Activated CD4-positive, alpha-beta memory T cell treated with anti-CD3 and anti-CD28 coated beads, Interleukin-2, amount 10 ng/mL, durations not matched to agents 7 days and 5 days (primary cell): ENCODE measurements at regions of chr6 and their contacts with region 1.

Region 1: DNA sequence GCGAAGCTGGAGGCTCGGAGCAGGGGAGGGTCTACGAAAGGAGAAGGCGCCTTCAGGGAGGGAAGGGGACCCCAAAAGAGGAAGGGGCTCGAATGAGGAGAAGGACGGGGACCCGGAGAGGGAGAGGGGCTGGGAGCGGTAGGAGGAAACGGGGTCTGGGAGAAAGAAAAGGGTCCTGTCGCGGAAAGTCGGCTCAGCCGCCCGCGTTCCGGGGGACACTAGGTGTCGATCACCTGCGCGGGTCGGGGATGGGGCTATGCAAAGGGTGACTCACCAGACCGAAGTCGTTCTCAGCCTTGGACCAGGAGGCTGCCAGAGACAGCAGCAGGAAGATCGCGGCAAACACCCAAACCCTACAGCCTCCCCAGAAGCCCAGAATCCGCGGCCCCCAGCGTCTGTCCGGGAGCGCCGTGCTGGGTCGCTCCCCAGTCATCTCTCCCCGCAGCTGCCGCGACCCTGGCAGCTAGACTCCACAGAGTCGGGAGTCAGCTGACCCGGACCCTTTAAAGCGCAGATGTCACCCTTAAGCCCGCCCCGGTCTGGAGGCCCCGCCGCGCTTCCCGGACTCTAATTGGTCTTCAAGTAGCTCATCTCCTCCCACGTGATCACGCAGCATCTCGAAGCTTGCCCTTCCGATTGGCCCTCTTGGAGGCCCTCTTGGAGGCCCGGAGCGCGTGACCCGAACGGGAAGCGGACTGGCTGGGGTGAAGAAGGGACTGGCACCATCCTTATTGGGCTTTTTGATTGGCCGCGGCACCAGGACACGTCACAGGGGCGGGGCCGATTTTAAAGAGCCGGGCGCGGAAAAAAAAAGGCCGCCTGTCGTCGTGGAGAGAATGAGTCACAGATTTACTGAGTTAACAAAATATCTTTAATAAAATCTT is at the start of gene NEU1:
- DNase-seq: peak; percentile 100
- H3K4me3 Mint-ChIP-seq: peak within 1 kb of the TSS; percentile 89
- H3K27ac Mint-ChIP-seq: peak within 1 kb of the TSS; percentile 66
- H3K4me1 Mint-ChIP-seq: peaks cover 23% of the 10 kb centered on the region
- H3K27me3 Mint-ChIP-seq: no peaks in the 10 kb centered on the region
- total RNA-seq, gene NEU1: 29.2 to 29.6 TPM

Region 2: DNA sequence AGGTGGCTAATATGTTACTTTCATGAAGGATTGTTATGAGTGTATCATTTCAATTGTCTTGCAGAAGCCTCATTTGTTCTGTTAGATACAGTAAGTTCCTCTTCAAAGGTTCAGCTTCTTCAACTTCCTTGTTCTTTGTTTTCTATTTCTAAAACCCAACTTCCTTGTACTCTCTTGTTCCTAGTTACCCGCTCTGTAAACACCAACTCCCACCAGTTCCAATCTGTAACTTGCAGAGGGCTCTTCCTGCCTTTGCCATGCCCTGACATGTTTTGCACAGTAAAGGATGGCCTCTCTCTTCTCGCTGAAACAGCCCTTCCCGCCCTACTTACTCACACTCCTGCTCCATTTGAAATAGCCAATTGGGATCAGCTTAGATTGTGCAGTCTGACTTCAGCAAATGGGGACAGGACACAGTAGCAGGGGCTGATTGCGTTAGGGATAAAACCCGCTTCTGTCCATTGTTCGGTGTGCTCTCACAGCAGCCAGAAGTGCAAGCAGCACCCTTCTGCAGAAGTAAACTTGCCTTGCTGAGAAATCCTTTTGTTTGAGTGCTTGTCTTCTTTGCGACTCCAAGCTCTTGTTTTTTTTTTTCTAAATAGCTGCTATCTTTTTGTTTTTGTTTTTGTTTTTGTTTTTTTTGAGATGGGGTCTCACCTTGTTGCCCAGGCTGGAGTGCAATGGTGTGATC is 646.2 kb before region 1 on chr6:
- CTCF ChIA-PET with region 1: no interaction called
- POLR2A ChIA-PET with region 1: no interaction called
- DNase-seq: no peak
- H3K4me3 Mint-ChIP-seq: no peak overlapping the region
- H3K27ac Mint-ChIP-seq: no peak overlapping the region
- H3K4me1 Mint-ChIP-seq: peaks cover 3% of the 10 kb centered on the region
- H3K27me3 Mint-ChIP-seq: peaks cover 6% of the 10 kb centered on the region

Region 3: DNA sequence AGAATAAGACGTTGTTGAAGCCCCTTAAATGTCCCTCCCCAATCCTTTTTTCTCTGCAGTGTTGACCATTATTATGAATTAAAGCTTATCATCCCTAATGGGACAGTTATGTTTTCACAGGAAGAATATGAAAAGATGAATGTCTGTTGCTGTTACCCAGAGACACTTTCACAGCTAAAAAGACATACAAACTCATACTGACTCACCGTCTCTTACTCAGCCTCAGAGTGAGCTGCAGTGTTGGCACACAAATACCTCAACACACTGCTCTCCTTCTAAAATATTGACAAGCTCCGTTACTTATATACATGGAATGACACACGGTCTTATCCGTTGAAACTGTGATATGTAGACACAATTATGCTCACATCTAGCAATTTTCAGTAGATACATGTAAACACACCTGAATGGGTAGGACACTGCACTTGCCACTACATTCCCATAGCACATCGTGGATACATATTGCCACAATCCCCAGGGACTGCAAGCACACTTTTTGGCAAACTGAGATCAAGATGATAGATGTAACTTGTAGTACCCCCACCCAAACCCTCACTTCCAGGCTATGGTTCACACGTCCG is 109.8 kb before region 1 on chr6:
- CTCF ChIA-PET with region 1: no interaction called
- POLR2A ChIA-PET with region 1: no interaction called
- DNase-seq: no peak
- H3K4me3 Mint-ChIP-seq: no peak overlapping the region
- H3K27ac Mint-ChIP-seq: no peak overlapping the region
- H3K4me1 Mint-ChIP-seq: no peaks in the 10 kb centered on the region
- H3K27me3 Mint-ChIP-seq: no peaks in the 10 kb centered on the region

Region 4: GRCh38 chr6:31834434-31835198 is 28.0 kb before region 1 on chr6:
- CTCF ChIA-PET with region 1: interaction called, 14 read pairs
- POLR2A ChIA-PET with region 1: interaction called, 18 read pairs
- DNase-seq: peak; percentile 79
- H3K4me3 Mint-ChIP-seq: peak overlapping the region; percentile 81
- H3K27ac Mint-ChIP-seq: peak overlapping the region; percentile 91
- H3K4me1 Mint-ChIP-seq: peaks cover 56% of the 10 kb centered on the region
- H3K27me3 Mint-ChIP-seq: no peaks in the 10 kb centered on the region

Region 5: GRCh38 chr6:31851485-31851832 is 11.1 kb before region 1 on chr6:
- CTCF ChIA-PET with region 1: no interaction called
- POLR2A ChIA-PET with region 1: no interaction called
- DNase-seq: no peak
- H3K4me3 Mint-ChIP-seq: no peak overlapping the region
- H3K27ac Mint-ChIP-seq: no peak overlapping the region
- H3K4me1 Mint-ChIP-seq: no peaks in the 10 kb centered on the region
- H3K27me3 Mint-ChIP-seq: no peaks in the 10 kb centered on the region